ENCODE measurements at regions of chr16 and their contacts with region 1.

Region 1: DNA sequence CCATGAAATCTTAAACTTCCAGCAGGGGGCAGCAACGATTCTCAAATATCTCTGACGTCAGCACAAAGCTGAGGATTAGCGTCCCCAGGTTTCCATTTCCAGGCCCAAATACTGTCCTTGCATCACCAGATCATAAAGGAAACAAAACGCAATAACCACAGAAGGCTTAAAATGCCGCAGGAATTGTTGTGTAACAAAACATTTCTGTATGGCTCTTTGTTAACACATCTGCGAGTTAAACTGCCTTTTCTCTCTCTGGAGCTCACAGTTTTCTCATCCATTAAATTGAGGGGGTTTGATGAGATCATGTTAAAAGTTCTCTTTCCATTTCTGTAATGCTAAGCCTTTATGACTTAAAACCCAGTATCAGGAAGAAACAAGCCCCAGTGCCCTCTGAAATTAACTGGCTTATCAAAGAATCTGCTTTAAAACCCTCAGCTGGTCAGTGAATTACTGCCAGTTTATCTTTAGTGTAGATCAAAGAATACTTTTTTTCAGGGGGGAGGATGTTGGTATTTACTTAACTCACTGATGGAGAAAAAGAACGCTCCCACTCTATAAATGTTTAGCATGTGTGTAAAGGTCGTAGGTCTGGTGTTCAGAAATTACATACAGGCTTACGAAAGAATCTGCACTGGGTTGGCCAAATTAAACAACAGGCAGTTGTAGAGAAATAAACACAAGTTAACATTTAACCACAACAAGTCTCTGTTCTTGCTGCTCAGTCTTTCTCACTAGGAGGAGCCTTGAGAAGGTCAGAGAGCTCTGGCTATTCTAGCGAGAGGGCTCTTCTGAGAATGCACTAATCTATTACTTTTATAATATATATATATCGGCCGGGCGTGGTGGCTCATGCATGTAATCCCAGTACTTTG is 10.6 kb upstream of the TERF2 start:
- H3K4me3 ChIP-seq: no peak overlapping the region
- H3K27ac ChIP-seq: peak overlapping the region; percentile 56
- H3K4me1 ChIP-seq: peaks cover 9% of the 10 kb centered on the region
- CTCF ChIP-seq: peak; percentile 24; the same call in 1 of the 2 replicates

Region 2: DNA sequence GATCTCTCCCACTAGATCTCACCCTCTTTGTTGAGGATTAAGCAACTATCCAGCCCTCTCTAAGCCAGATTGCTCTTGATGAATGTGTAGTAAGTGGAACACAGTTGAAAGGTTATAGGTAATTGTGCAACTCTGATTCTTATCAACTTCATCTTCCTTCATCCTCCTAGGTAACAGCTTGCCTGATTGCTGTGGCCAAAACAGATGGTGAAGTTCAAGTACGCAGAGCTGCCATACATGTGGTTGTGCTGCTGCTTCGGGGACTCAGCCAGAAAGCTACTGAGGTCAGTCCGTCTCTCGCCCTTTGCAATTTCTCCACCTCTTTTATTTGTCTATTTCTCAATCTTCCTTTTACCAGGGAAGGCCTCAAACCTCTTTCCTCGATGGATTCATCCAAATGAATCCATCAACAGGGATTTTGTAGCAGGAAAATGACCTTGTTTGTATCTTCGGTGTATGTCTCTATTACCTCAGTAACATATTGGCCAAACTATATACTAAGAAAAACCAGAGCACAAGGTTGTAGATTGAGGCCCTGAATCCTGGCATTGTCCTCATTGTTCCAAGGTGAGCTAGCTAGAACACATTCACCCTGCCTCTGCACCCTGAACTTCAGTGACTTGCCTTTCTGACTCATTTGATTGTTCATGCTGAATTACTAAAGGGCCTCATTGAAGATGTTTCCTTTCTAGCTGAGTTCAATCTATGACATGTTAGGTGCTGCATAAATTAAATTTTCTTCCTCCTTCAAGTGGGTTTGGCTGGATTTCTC is 356.1 kb before region 1 on chr16:
- CTCF ChIA-PET with region 1: no interaction called
- POLR2A ChIA-PET with region 1: no interaction called
- H3K4me3 ChIP-seq: no peak overlapping the region
- H3K27ac ChIP-seq: no peak overlapping the region
- H3K4me1 ChIP-seq: no peaks in the 10 kb centered on the region
- CTCF ChIP-seq: no peak

Region 3: DNA sequence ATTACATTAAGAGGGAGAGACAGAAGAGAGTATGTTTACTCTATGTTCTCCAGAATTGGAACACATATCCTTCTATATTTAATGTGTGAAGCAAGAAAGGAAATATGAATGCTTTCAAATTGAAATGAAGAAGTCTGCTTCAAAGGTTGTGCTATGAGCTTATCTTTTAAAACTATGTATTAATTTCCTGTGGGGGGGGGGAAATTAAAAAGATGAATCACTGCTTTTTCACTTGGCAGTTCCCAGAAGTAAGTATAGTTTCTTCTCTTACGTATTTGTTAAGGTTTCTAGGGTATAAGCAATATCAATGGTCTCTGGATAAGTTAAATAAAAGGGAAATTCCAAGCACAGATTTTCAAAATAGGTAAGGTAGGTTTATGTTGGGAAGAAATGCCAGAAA is 17.7 kb before region 1 on chr16:
- CTCF ChIA-PET with region 1: interaction called, 10 read pairs
- POLR2A ChIA-PET with region 1: no interaction called
- H3K4me3 ChIP-seq: no peak overlapping the region
- H3K27ac ChIP-seq: no peak overlapping the region
- H3K4me1 ChIP-seq: no peaks in the 10 kb centered on the region
- CTCF ChIP-seq: no peak

Region 4: DNA sequence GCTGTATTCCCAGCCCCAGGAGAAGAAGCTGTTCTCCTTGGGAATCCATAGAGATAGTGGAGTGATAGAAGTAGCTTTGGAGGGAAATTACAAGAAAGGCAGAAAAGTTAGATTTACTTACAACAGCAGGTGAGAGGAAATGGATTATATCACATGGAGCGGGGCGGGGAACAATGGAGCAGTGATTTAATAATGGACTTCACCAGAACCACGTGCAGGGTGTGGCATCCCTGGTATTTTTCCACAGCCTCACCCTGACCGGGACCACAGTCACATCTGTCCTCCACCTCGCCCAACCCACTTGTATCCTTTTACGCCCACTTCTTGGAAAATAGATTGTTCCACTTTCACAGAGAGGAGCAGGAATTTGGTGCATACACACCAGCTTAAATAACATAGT is 12.0 kb after region 1 on chr16:
- CTCF ChIA-PET with region 1: interaction called, 10 read pairs
- POLR2A ChIA-PET with region 1: interaction called, 3 read pairs
- H3K4me3 ChIP-seq: no peak overlapping the region
- H3K27ac ChIP-seq: no peak overlapping the region
- H3K4me1 ChIP-seq: peaks cover 14% of the 10 kb centered on the region
- CTCF ChIP-seq: no peak

Measured in HEK293 (cell line).